Activated CD4-positive, alpha-beta memory T cell treated with anti-CD3 and anti-CD28 coated beads, Interleukin-2, amount 10 ng/mL, durations not matched to agents 7 days and 5 days (primary cell): ENCODE measurements at regions of chr1 and their contacts with region 1.

Region 1: GRCh38 chr1:109099938-109100773 is 9.6 kb downstream of the TMEM167B start:
- DNase-seq: peak; percentile 97
- H3K4me3 Mint-ChIP-seq: peak overlapping the region; percentile 99
- H3K27ac Mint-ChIP-seq: peak overlapping the region; percentile 94
- H3K4me1 Mint-ChIP-seq: peaks cover 12% of the 10 kb centered on the region
- H3K27me3 Mint-ChIP-seq: no peaks in the 10 kb centered on the region

Region 2: GRCh38 chr1:109041621-109042468 is 58.3 kb before region 1 on chr1 and contains the start of gene WDR47:
- CTCF ChIA-PET with region 1: interaction called, 15 read pairs
- POLR2A ChIA-PET with region 1: interaction called, 16 read pairs
- DNase-seq: peak; percentile 97
- H3K4me3 Mint-ChIP-seq: peak within 1 kb of the TSS; percentile 92
- H3K27ac Mint-ChIP-seq: peak within 1 kb of the TSS; percentile 88
- H3K4me1 Mint-ChIP-seq: peaks cover 25% of the 10 kb centered on the region
- H3K27me3 Mint-ChIP-seq: peaks cover 3% of the 10 kb centered on the region
- total RNA-seq, gene WDR47: 10.6 to 10.9 TPM

Region 3: GRCh38 chr1:109083923-109084322 is 16.2 kb before region 1 on chr1:
- CTCF ChIA-PET with region 1: interaction called, 22 read pairs
- POLR2A ChIA-PET with region 1: interaction called, 32 read pairs
- DNase-seq: no peak
- H3K4me3 Mint-ChIP-seq: no peak overlapping the region
- H3K27ac Mint-ChIP-seq: no peak overlapping the region
- H3K4me1 Mint-ChIP-seq: peaks cover 4% of the 10 kb centered on the region
- H3K27me3 Mint-ChIP-seq: no peaks in the 10 kb centered on the region

Region 4: DNA sequence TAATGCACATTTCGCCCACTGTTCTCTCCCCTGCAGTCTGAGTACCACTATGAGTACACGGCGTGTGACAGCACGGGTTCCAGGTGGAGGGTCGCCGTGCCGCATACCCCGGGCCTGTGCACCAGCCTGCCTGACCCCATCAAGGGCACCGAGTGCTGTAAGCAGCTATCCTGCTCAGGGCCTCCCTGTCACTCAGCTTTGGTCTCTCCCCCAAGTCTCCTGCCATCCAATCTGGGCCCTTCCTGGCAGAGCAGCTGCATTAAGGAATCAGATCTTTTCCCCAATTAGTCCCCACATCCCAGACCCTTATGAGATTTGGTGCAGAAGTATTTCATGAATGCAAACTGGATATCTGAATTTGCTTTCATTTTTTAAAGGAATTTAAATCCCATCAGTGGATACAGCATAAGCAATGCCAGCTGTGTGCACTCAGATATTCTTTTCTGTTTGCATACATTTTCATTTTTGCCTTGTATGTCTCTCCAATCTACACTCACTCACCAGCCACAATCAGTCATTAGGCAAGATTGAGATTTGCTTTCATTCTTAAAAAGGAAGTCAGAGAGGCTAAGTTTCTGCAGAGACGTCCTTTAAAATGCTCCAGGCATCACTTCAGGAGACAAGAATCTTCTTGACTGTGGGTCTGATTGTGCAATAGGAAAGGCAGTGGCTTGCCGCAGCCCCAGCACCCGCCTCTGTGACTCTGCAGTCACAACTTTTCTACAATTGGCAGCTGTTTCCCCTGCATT is 61.9 kb after region 1 on chr1:
- CTCF ChIA-PET with region 1: interaction called, 8 read pairs
- POLR2A ChIA-PET with region 1: interaction called, 10 read pairs
- DNase-seq: peak; percentile 72
- H3K4me3 Mint-ChIP-seq: no peak overlapping the region
- H3K27ac Mint-ChIP-seq: peak overlapping the region; percentile 66
- H3K4me1 Mint-ChIP-seq: peaks cover 33% of the 10 kb centered on the region
- H3K27me3 Mint-ChIP-seq: no peaks in the 10 kb centered on the region

Region 5: DNA sequence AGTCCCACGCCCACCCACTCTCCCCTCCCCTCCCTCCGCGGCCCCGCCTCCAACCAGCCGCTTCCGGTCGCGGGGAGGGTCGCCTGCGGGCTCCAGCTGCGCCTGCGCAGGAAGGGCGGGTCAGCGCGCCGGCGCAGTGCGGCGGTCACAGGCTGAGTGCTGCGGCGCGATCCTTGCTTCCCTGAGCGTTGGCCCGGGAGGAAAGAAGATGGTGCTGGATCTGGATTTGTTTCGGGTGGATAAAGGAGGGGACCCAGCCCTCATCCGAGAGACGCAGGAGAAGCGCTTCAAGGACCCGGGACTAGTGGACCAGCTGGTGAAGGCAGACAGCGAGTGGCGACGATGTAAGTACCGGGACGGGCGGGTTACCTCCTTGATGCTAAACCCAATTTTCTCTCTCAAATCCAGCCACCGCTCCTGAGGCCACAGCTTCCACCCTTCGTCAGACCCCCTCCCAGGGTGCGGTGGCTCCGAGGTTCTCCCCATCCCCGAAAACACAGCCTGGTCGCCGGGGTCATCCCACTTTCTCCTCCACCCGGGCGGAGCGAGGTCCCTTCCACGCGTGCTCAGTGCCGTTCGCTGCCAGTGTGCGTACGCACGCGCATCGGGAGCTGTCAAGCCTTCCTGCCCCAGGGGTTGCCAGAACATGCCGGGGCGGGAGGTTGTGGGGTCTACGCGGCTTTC is 113.8 kb after region 1 on chr1 and contains the start of gene SARS1:
- CTCF ChIA-PET with region 1: interaction called, 9 read pairs
- POLR2A ChIA-PET with region 1: interaction called, 14 read pairs
- DNase-seq: peak; percentile 90
- H3K4me3 Mint-ChIP-seq: peak within 1 kb of the TSS; percentile 98
- H3K27ac Mint-ChIP-seq: peak within 1 kb of the TSS; percentile 87
- H3K4me1 Mint-ChIP-seq: peaks cover 36% of the 10 kb centered on the region
- H3K27me3 Mint-ChIP-seq: peaks cover 7% of the 10 kb centered on the region
- total RNA-seq, gene SARS1: 193 to 195 TPM

Region 6: GRCh38 chr1:109385417-109385816 is 285.3 kb after region 1 on chr1:
- CTCF ChIA-PET with region 1: no interaction called
- POLR2A ChIA-PET with region 1: no interaction called
- DNase-seq: no peak
- H3K4me3 Mint-ChIP-seq: no peak overlapping the region
- H3K27ac Mint-ChIP-seq: no peak overlapping the region
- H3K4me1 Mint-ChIP-seq: peaks cover 10% of the 10 kb centered on the region
- H3K27me3 Mint-ChIP-seq: peaks cover 18% of the 10 kb centered on the region